T-cell (primary cell): ENCODE measurements at regions of chr9 and their contacts with region 1.

Region 1: GRCh38 chr9:82665324-82665723 is 397.6 kb downstream of the RASEF start:
- DNase-seq: no peak
- ATAC-seq: no peak
- H3K4me3 ChIP-seq: no peak overlapping the region
- H3K4me3 Mint-ChIP-seq: no peak overlapping the region
- H3K27ac ChIP-seq: no peak overlapping the region
- H3K27ac Mint-ChIP-seq: no peak overlapping the region
- H3K4me1 ChIP-seq: no peaks in the 10 kb centered on the region
- H3K4me1 Mint-ChIP-seq: no peaks in the 10 kb centered on the region
- H3K27me3 ChIP-seq: no peaks in the 10 kb centered on the region
- H3K27me3 Mint-ChIP-seq: no peaks in the 10 kb centered on the region

Region 2: DNA sequence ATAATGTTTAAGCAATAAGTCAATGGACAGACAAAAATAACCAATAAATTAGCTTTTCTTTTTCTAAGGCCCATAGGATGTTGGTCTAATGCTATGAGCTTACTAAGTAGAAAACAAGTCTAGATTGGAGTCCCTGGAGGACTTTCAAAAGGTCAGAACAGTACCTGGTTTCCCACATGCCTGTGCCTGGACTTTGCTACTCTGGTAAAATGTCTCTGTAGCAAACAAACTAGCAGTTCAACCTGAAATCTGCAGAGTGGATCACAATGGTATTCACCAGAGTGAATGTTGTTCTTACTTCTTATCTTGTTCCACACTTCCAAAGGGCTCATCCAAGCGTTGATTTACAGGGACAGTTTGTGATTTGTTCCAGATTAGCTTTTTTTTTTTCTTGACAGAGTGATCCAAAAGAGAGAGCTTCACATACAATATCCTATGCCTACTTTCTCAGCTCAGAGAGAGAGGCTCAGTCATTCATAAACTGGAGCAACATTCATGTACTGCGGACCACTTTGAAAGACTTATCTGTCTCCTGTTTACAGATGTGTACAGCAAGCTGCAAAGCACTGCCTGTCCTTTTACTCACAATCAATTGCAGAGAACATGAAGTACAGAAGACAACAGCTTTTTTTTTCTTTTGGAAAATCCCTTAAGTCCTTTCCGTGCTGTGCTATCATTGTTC is 210.7 kb before region 1 on chr9:
- CTCF ChIA-PET with region 1: no interaction called
- POLR2A ChIA-PET with region 1: interaction called in 1 of 2 experiments, 19 read pairs
- DNase-seq: no peak
- ATAC-seq: no peak
- H3K4me3 ChIP-seq: no peak overlapping the region
- H3K4me3 Mint-ChIP-seq: no peak overlapping the region
- H3K27ac ChIP-seq: no peak overlapping the region
- H3K27ac Mint-ChIP-seq: no peak overlapping the region
- H3K4me1 ChIP-seq: no peaks in the 10 kb centered on the region
- H3K4me1 Mint-ChIP-seq: no peaks in the 10 kb centered on the region
- H3K27me3 ChIP-seq: no peaks in the 10 kb centered on the region
- H3K27me3 Mint-ChIP-seq: no peaks in the 10 kb centered on the region